Sigmoid colon (tissue), 7 donors: ENCODE measurements at regions of chr10 and their contacts with region 1.

Region 1: DNA sequence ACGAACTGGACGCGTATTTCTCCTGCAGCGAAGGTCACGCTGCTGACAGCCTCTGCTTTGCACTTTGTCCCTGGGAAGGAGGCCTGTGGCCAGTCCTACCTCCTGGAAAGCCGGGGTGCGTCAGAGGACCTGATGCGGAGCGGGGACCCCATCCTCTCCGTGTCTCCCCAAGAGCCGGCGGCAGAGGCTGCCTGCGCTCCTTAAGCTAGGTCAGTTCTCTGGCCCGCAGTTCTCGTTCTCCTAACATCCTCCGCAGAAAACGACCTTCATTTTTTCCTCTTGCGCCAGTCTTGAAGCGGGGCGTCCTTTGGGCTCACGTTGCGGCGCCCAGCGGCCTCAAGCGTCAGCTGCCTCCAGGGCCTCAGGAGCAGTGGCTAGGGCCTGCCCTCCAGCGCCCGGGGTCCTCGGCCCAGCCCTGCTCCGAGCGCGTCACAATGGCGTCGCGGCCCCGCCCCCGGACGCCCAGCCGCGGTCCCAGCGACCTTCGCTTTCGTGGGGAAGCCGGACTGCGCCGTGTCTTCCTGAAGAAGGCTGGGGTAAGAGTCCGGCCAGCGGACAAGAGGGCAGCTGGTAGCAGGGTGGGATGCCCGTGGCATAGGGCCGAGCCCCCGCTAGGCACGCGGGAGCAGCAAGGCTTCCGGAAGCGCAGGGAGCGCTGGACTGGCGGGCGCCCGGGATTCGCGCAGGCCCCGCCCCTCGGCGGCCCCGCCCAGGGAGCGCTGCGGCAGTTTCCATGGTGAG is at the start of gene ZNF487:
- DNase-seq: peak; percentile 94
- H3K4me3 ChIP-seq: peak within 1 kb of the TSS; percentile 52 to 79 (median 69)
- H3K27ac ChIP-seq: peak within 1 kb of the TSS; percentile 86 to 99 (median 97)
- H3K4me1 ChIP-seq: peaks cover 0 to 19% (median 14%) of the 10 kb centered on the region in 4 donors
- H3K27me3 ChIP-seq: no peaks in the 10 kb centered on the region
- CTCF ChIP-seq: no peak
- EP300 ChIP-seq: peak in 2 of 4 donors; percentile 3 to 42
- POLR2A ChIP-seq: peak; percentile 80 to 87
- total RNA-seq, gene ZNF487: 6.1 to 21.6 (median 13.3) TPM

Region 2: DNA sequence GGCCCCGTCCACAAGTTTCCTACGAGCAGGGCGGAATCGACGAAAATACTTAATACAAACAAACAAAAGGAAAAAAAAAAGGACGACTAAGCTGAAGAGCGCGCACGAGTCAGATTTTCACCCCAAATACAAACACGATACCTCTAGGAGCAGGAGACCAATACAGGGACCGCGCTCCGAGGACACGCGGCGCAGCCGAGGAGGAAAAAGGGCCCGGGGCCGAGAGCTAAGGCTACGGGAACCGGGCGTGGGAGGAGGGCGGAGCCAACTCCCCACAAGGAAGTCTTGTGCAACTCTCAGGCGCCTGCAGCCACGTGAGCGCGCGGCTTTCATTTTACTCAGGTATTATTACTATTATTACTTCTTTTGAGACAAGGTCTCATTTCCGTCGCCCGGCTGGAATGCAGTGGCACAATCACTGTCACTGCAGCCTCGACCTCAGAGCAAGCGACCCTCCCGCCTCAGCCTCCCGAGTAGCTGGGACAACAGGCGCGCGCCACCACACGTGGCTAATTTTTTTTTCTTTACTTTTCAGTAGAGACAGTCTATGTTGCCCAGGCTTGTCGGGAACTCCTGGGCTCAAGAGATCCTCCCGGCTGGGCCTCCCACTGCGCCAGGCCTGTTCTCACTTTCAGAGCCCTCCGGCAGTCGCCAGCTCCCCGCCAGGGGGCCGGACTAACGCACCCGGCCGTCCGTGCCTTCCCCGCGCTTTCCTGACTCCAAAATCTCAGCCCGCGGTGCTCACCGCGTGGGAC is 28.8 kb before region 1 on chr10:
- intact Hi-C with region 1: loop called (anchors 1 kb)
- DNase-seq: peak; percentile 98
- H3K4me3 ChIP-seq: peak overlapping the region; percentile 64 to 91 (median 80)
- H3K27ac ChIP-seq: peak overlapping the region; percentile 94 to 99 (median 99)
- H3K4me1 ChIP-seq: peaks cover 0 to 52% (median 48%) of the 10 kb centered on the region in 4 donors
- H3K27me3 ChIP-seq: no peaks in the 10 kb centered on the region
- CTCF ChIP-seq: peak; percentile 10 to 39 (median 36)
- EP300 ChIP-seq: peak in 1 of 4 donors; percentile 69
- POLR2A ChIP-seq: peak; percentile 56 to 62

Region 3: DNA sequence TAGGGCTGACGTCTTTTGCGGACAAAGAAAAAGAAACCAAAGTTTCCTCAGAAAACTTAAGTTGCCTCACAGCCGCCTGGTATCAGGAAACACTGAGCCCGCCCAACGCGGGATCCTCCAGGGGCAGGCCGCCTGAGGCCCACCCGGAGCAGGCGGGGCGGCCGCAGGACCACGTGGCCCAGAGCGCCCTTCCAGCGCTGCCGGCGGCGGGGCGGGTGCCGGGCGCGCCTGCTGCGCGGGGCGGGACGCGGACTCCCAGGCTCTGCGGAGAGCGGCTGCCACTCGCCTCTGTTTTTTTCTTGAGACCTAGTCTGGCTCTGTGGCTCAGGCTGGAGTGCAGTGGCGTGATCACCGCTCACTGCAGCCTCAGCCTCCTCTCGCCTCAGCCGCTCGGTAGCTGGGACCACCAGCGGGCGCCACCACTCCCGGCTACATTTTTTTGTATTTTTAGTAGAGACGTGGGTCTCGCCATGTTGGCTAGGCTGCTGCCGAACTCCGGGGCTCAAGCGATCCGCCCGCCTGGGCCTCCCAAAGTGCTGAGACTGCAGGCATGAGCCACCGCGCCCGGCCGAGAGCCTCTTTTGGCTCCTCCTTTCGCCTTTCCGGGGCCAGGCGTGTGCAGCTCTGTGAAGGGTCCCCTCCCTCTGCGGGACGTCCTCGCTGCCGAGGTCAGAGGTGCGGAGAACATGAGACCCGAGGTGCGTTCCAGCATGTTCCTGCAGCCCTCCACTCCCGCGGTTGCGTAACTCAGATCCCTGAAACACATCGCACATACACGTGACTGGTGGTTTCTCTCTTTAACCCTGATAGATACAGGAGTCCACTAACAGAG is 16.0 kb before region 1 on chr10:
- intact Hi-C with region 1: loop called (anchors 2 kb)
- DNase-seq: peak; percentile 98
- H3K4me3 ChIP-seq: peak overlapping the region; percentile 43 to 68 (median 62)
- H3K27ac ChIP-seq: peak overlapping the region; percentile 97 to 99 (median 98)
- H3K4me1 ChIP-seq: peaks cover 0 to 19% (median 11%) of the 10 kb centered on the region in 4 donors
- H3K27me3 ChIP-seq: no peaks in the 10 kb centered on the region
- CTCF ChIP-seq: no peak
- EP300 ChIP-seq: peak in 1 of 4 donors; percentile 72
- POLR2A ChIP-seq: peak; percentile 47 to 53